ENCODE measurements at regions of chr14 and their contacts with region 1.

Region 1: GRCh38 chr14:49852301-49853157 is at the start of gene NEMF:
- DNase-seq: peak; percentile 49 to 92 (median 68)
- ATAC-seq: peak; percentile 75 to 83 (median 78)
- H3K4me3 ChIP-seq: peak within 1 kb of the TSS; percentile 79 to 96
- H3K4me3 Mint-ChIP-seq: peak within 1 kb of the TSS; percentile 98 to 100 (median 99)
- H3K27ac ChIP-seq: peak within 1 kb of the TSS; percentile 73
- H3K27ac Mint-ChIP-seq: peak within 1 kb of the TSS; percentile 96 to 97
- H3K4me1 ChIP-seq: peaks cover 11 to 19% of the 10 kb centered on the region in 2 experiments
- H3K4me1 Mint-ChIP-seq: peaks cover 43 to 55% (median 45%) of the 10 kb centered on the region in 3 donors
- H3K27me3 ChIP-seq: no peaks in the 10 kb centered on the region
- H3K27me3 Mint-ChIP-seq: no peaks in the 10 kb centered on the region
- total RNA-seq, gene NEMF: 73.0 to 106 (median 88.8) TPM

Region 2: DNA sequence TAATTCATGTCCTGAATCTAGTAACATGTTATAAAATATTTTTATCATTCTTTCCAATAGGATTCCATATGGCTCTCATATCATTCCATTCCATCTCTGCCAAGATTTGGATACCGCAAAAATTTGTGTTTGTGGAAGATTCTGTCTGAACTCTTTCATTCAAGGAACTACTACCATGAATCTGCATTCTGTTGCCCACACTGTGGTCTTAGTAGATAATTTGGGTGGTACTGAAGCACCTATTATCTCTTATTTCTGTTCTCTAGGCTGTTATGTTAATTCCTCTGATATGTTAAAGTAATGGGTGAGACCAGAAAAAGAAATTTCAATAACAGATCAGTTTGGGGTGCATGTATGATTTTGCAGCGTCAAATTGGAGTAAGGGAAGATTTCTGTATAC is 238.3 kb before region 1 on chr14:
- CTCF ChIA-PET with region 1: no interaction called
- POLR2A ChIA-PET with region 1: no interaction called
- DNase-seq: no peak
- ATAC-seq: no peak
- H3K4me3 ChIP-seq: no peak overlapping the region
- H3K4me3 Mint-ChIP-seq: no peak overlapping the region
- H3K27ac ChIP-seq: no peak overlapping the region
- H3K27ac Mint-ChIP-seq: no peak overlapping the region
- H3K4me1 ChIP-seq: peaks cover 0 to 8% of the 10 kb centered on the region in 2 experiments
- H3K4me1 Mint-ChIP-seq: peaks cover 18 to 23% (median 19%) of the 10 kb centered on the region in 3 donors
- H3K27me3 ChIP-seq: no peaks in the 10 kb centered on the region
- H3K27me3 Mint-ChIP-seq: no peaks in the 10 kb centered on the region

Region 3: GRCh38 chr14:49767562-49768300 is 84.8 kb before region 1 on chr14 and contains the start of gene KLHDC2:
- CTCF ChIA-PET with region 1: interaction called, 3 to 11 read pairs
- POLR2A ChIA-PET with region 1: interaction called in 1 of 2 experiments, 3 read pairs
- DNase-seq: peak; percentile 78 to 93 (median 86)
- ATAC-seq: peak; percentile 81 to 91 (median 88)
- H3K4me3 ChIP-seq: peak within 1 kb of the TSS; percentile 98 to 99
- H3K4me3 Mint-ChIP-seq: peak within 1 kb of the TSS; percentile 92 to 98 (median 95)
- H3K27ac ChIP-seq: peak within 1 kb of the TSS; percentile 98
- H3K27ac Mint-ChIP-seq: peak within 1 kb of the TSS; percentile 98 to 99
- H3K4me1 ChIP-seq: peaks cover 10 to 32% of the 10 kb centered on the region in 2 experiments
- H3K4me1 Mint-ChIP-seq: peaks cover 33 to 40% (median 38%) of the 10 kb centered on the region in 3 donors
- H3K27me3 ChIP-seq: no peaks in the 10 kb centered on the region
- H3K27me3 Mint-ChIP-seq: no peaks in the 10 kb centered on the region
- total RNA-seq, gene KLHDC2: 69.0 to 115 (median 69.2) TPM

Region 4: GRCh38 chr14:50003213-50004031 is 150.9 kb after region 1 on chr14:
- CTCF ChIA-PET with region 1: interaction called, 3 to 12 read pairs
- POLR2A ChIA-PET with region 1: interaction called in 1 of 2 experiments, 3 read pairs
- DNase-seq: peak; percentile 59 to 86 (median 72)
- ATAC-seq: peak; percentile 40 to 47 (median 44)
- H3K4me3 ChIP-seq: peak overlapping the region; percentile 60 to 83
- H3K4me3 Mint-ChIP-seq: peak overlapping the region; percentile 73 to 78 (median 75)
- H3K27ac ChIP-seq: peak overlapping the region; percentile 100
- H3K27ac Mint-ChIP-seq: peak overlapping the region; percentile 96 to 98
- H3K4me1 ChIP-seq: peaks cover 42 to 59% of the 10 kb centered on the region in 2 experiments
- H3K4me1 Mint-ChIP-seq: peaks cover 46 to 62% (median 52%) of the 10 kb centered on the region in 3 donors
- H3K27me3 ChIP-seq: no peaks in the 10 kb centered on the region
- H3K27me3 Mint-ChIP-seq: no peaks in the 10 kb centered on the region

Region 5: DNA sequence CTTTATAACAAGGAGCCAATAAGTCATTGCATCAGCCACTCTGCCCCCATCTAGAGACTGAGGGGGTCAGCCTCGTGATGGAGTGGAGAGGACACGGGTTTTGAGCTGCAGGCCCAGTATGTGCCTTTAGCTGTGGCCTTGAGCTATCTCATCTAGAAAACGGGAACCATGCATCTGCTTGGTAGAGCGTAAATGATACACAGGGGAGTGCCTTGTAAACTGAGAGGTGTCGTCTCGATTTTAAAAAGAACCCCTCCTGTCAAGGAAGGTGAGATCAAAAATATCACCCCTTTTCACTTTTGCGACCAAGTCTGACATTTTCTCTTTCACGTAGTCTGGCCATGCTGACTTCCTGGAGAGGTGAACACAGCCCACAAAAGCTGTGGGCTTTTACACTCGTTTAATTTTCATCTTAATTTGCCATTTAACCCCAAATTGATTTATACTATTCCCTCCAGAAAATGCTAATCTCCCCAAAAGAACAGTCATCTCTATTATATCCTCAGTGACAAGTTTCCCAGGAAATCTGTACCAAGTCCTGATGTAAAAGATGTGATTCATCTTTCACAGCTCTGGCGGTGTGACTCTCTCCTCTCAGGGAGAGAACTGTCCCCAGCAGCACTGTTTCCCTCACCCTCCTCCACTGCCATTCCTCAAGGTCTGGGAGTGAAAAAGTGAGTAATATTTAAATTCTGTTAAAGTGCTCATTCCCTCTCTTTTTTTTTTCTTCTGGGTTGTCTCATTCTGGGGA is 233.2 kb after region 1 on chr14:
- CTCF ChIA-PET with region 1: interaction called, 7 to 11 read pairs
- POLR2A ChIA-PET with region 1: no interaction called
- DNase-seq: peak in 4 of 35 experiments; percentile 13 to 63 (median 26)
- ATAC-seq: no peak
- H3K4me3 ChIP-seq: no peak overlapping the region
- H3K4me3 Mint-ChIP-seq: peak overlapping the region; percentile 39 to 70 (median 59)
- H3K27ac ChIP-seq: peak overlapping the region; percentile 99
- H3K27ac Mint-ChIP-seq: peak overlapping the region; percentile 95 to 96
- H3K4me1 ChIP-seq: peaks cover 83 to 90% of the 10 kb centered on the region in 2 experiments
- H3K4me1 Mint-ChIP-seq: peaks cover 91 to 93% (median 92%) of the 10 kb centered on the region in 3 donors
- H3K27me3 ChIP-seq: no peaks in the 10 kb centered on the region
- H3K27me3 Mint-ChIP-seq: no peaks in the 10 kb centered on the region

Region 6: DNA sequence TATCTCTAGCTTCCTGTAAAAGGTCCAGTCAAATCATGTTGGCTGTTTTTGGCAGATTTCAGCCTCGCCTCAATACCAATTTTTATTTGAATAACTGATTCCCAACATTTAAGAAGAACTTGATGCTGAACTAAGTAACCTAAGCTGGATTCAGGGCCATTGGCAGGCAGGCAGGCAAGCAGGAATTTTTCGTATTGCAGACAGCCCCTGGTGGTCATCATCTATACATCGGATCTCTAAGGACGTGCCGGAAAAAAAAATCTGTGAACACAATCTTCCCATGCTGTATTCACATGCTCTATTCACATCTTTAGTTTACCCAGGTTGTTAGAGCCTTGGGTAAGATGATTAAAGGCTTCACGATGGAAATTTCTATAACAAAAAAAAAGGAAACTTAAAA is 256.8 kb after region 1 on chr14:
- CTCF ChIA-PET with region 1: interaction called, 8 to 22 read pairs
- POLR2A ChIA-PET with region 1: interaction called, 5 to 15 read pairs
- DNase-seq: no peak
- ATAC-seq: no peak
- H3K4me3 ChIP-seq: no peak overlapping the region
- H3K4me3 Mint-ChIP-seq: no peak overlapping the region
- H3K27ac ChIP-seq: no peak overlapping the region
- H3K27ac Mint-ChIP-seq: peak overlapping the region in 1 of 2 donors; percentile 68
- H3K4me1 ChIP-seq: peaks cover 0 to 3% of the 10 kb centered on the region in 2 experiments
- H3K4me1 Mint-ChIP-seq: peaks cover 10 to 27% (median 25%) of the 10 kb centered on the region in 3 donors
- H3K27me3 ChIP-seq: no peaks in the 10 kb centered on the region
- H3K27me3 Mint-ChIP-seq: no peaks in the 10 kb centered on the region

Measured in T-cell (primary cell).